CD4-positive, alpha-beta memory T cell (primary cell): ENCODE measurements at regions of chr18 and their contacts with region 1.

Region 1: DNA sequence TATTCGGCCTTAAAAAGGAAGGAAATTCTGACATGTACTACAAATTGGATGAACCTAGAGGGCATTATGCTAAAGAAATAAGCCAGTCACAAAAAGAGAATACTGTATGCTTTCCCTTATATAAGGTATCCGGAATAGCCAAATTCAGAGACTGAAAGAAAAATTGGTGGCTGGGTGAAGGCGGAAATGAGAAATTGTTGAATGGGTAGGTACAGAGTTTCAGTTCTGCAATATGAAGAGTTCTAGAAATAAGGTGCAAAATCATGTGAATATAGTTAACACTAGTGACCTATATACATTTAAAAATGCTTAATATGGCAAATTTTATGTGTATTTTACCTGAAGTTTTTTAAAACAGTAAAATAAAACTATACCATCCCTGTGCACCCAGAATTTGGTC is 43.1 kb downstream of the RMP24 start:
- DNase-seq: no peak
- H3K4me3 ChIP-seq: no peak overlapping the region
- H3K4me3 Mint-ChIP-seq: no peak overlapping the region
- H3K27ac ChIP-seq: no peak overlapping the region
- H3K27ac Mint-ChIP-seq: no peak overlapping the region
- H3K4me1 ChIP-seq: no peaks in the 10 kb centered on the region
- H3K4me1 Mint-ChIP-seq: peaks cover 0 to 7% (median 3%) of the 10 kb centered on the region in 4 donors
- H3K27me3 ChIP-seq: no peaks in the 10 kb centered on the region
- H3K27me3 Mint-ChIP-seq: no peaks in the 10 kb centered on the region

Region 2: DNA sequence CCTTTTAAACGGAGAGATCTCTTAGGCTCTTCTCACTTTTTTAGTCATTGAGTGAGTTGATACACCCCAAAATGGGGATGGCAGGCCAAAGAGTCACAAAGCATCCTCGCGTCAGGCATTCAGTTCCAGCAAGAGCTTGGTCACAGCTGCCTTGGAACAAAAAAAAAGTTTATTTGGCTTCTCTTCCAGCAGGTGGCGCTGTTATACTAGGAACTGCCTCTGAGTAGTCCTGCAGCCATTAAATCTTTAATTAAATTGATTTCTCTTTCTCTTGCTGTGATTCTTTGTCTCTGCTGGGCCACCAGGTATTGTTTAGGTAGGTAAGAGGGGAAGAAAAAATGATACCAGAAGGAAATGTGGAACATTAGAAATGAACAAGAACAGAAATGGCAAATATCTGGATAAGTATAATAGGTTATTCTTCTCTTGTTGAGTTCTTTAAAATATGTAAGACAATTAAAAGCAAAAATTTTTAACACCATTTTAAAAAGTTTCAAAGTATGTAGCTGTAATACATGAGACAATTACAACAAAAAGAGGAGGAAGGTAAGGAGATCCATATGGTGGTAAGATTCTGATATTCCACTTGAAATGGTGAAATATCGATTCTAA is 259.0 kb before region 1 on chr18:
- CTCF ChIA-PET with region 1: no interaction called
- POLR2A ChIA-PET with region 1: no interaction called
- intact Hi-C with region 1: loop called (anchors 5 kb)
- DNase-seq: peak in 4 of 5 donors; percentile 46 to 59 (median 58)
- H3K4me3 ChIP-seq: no peak overlapping the region
- H3K4me3 Mint-ChIP-seq: no peak overlapping the region
- H3K27ac ChIP-seq: no peak overlapping the region
- H3K27ac Mint-ChIP-seq: no peak overlapping the region
- H3K4me1 ChIP-seq: no peaks in the 10 kb centered on the region
- H3K4me1 Mint-ChIP-seq: no peaks in the 10 kb centered on the region
- H3K27me3 ChIP-seq: no peaks in the 10 kb centered on the region
- H3K27me3 Mint-ChIP-seq: peaks cover 11 to 17% of the 10 kb centered on the region in 2 donors

Region 3: GRCh38 chr18:35917044-35917443 is 98.6 kb before region 1 on chr18:
- CTCF ChIA-PET with region 1: no interaction called
- POLR2A ChIA-PET with region 1: no interaction called
- intact Hi-C with region 1: no loop called
- DNase-seq: no peak
- H3K4me3 ChIP-seq: no peak overlapping the region
- H3K4me3 Mint-ChIP-seq: no peak overlapping the region
- H3K27ac ChIP-seq: no peak overlapping the region
- H3K27ac Mint-ChIP-seq: no peak overlapping the region
- H3K4me1 ChIP-seq: no peaks in the 10 kb centered on the region
- H3K4me1 Mint-ChIP-seq: no peaks in the 10 kb centered on the region
- H3K27me3 ChIP-seq: no peaks in the 10 kb centered on the region
- H3K27me3 Mint-ChIP-seq: peaks cover 11 to 13% of the 10 kb centered on the region in 2 donors

Region 4: DNA sequence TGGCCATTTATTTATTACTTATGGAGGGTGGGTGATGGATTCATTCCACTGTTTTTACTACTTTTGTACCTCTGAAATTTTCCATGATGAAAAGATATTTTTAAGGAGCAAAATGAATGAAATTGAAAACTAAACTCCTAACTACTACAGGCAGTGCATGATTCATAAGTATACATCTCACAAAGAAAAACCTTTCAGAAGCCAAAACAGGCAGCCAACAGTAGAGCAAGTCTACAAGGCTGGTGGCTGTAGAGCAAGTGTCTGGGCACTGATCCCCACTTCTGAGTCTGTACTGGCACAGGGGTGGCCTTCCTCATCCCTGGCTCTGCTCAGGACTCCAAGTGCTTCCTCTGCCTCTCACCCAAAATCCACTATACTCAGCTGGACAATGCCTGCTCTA is 51.3 kb before region 1 on chr18:
- CTCF ChIA-PET with region 1: no interaction called
- POLR2A ChIA-PET with region 1: no interaction called
- intact Hi-C with region 1: no loop called
- DNase-seq: no peak
- H3K4me3 ChIP-seq: no peak overlapping the region
- H3K4me3 Mint-ChIP-seq: no peak overlapping the region
- H3K27ac ChIP-seq: no peak overlapping the region
- H3K27ac Mint-ChIP-seq: no peak overlapping the region
- H3K4me1 ChIP-seq: peaks cover 12% of the 10 kb centered on the region
- H3K4me1 Mint-ChIP-seq: peaks cover 7 to 23% (median 14%) of the 10 kb centered on the region in 4 donors
- H3K27me3 ChIP-seq: no peaks in the 10 kb centered on the region
- H3K27me3 Mint-ChIP-seq: peaks cover 1 to 2% of the 10 kb centered on the region in 2 donors

Region 5: DNA sequence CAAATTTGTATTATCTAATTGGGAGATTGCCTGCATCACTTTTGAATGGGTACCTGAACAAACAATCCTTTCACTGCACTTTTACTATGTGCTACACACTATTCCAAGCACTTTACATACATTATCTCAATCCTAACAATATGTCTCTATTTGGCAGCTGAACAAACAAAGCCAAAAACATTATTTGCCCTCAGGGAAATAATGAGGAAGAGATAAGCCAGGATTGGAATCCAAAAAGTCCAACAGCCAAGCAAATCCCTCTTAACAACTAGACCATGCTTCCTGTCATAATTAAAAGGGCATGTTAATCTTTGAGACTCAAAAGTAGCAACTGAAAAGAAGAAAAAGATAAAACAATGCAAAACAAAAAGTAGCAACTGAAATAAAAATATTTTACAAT is 19.6 kb after region 1 on chr18:
- CTCF ChIA-PET with region 1: interaction called, 11 read pairs
- POLR2A ChIA-PET with region 1: no interaction called
- intact Hi-C with region 1: no loop called
- DNase-seq: no peak
- H3K4me3 ChIP-seq: no peak overlapping the region
- H3K4me3 Mint-ChIP-seq: peak overlapping the region in 1 of 8 donors; percentile 45
- H3K27ac ChIP-seq: no peak overlapping the region
- H3K27ac Mint-ChIP-seq: peak overlapping the region in 2 of 7 donors; percentile 4 to 14
- H3K4me1 ChIP-seq: peaks cover 14% of the 10 kb centered on the region
- H3K4me1 Mint-ChIP-seq: peaks cover 23 to 49% (median 38%) of the 10 kb centered on the region in 4 donors
- H3K27me3 ChIP-seq: no peaks in the 10 kb centered on the region
- H3K27me3 Mint-ChIP-seq: no peaks in the 10 kb centered on the region

Region 6: DNA sequence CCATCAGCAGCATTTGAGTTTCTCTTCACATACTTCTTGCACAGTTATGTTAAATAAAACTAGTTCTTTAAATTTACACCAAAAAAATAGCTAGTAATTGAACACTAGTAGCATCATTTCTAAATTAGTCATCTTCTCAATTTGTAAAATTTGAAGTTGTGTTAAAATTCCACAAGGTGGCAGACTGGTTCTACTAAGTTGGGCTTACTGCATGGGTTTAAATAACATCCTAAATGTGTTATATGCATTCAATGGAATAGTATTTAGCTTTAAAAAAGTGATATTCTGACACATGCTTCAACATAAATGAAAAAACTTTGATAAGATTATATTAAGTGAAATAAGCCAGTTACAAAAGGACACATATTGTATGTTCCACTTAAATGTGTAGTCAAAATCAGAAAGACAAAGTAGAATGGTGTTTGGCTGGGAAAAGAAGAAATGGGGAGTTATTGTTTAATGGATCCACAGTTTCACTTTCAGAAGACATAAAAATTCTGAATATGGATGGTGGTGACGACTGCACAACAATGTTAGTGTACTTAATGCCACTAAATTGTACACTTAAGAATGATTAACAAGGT is 80.4 kb after region 1 on chr18:
- CTCF ChIA-PET with region 1: interaction called, 12 read pairs
- POLR2A ChIA-PET with region 1: no interaction called
- intact Hi-C with region 1: loop called (anchors 1 kb)
- DNase-seq: peak in 4 of 5 donors; percentile 42 to 47 (median 44)
- H3K4me3 ChIP-seq: no peak overlapping the region
- H3K4me3 Mint-ChIP-seq: no peak overlapping the region
- H3K27ac ChIP-seq: no peak overlapping the region
- H3K27ac Mint-ChIP-seq: no peak overlapping the region
- H3K4me1 ChIP-seq: no peaks in the 10 kb centered on the region
- H3K4me1 Mint-ChIP-seq: peaks cover 9 to 13% (median 11%) of the 10 kb centered on the region in 4 donors
- H3K27me3 ChIP-seq: no peaks in the 10 kb centered on the region
- H3K27me3 Mint-ChIP-seq: peaks cover 2 to 5% of the 10 kb centered on the region in 2 donors

Region 7: DNA sequence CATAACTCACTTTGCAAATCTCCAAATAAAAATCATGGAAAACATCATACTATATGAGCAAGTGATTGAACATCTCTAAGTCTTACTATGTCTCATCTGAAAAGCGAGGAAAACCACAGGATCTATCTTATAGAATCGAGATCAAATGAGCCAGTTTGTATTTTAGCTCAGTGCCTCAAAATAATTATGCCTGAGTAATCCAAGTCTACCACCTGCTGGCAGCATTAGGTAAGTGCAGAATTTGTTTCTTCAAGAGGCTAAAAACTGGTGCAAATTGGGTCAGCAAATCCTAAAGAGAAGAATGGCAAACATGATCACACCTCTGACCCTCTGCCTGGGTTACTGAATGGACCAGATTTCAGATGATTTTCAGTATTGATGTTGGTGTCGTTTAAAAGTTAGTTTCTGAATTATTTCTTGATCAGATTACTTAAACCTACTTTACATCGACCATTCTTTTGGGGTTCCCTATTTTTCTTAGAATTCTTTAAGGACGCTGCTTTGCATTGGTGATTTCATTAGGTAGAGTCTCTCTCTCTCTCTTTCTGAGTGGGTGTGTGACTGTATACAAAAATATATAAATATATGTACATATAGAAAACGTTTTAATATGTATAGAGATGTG is 269.2 kb after region 1 on chr18:
- CTCF ChIA-PET with region 1: interaction called, 200 read pairs
- POLR2A ChIA-PET with region 1: no interaction called
- intact Hi-C with region 1: loop called (anchors 1 kb)
- DNase-seq: peak; percentile 51 to 58 (median 53)
- H3K4me3 ChIP-seq: no peak overlapping the region
- H3K4me3 Mint-ChIP-seq: no peak overlapping the region
- H3K27ac ChIP-seq: no peak overlapping the region
- H3K27ac Mint-ChIP-seq: no peak overlapping the region
- H3K4me1 ChIP-seq: no peaks in the 10 kb centered on the region
- H3K4me1 Mint-ChIP-seq: peaks cover 0 to 2% (median 0%) of the 10 kb centered on the region in 4 donors
- H3K27me3 ChIP-seq: no peaks in the 10 kb centered on the region
- H3K27me3 Mint-ChIP-seq: peaks cover 15 to 23% of the 10 kb centered on the region in 2 donors

Region 8: DNA sequence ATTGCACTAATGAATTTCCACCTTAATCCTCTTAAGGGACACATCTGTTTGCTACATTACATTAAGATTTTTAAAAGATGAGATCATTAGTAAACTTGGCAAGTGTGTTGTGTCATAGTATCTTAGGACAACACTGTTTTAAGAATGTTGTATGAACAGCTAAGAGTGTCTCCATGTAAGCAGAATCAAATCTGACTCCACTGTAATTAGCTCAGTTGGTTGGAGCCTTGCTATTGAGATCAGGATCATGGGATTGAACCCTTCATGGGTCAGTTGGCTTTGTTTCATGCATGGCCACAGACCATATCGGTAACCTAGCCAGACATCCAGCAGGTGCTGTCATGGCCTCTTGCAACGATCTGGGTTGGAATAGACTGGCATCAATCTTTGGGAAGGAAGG is 287.0 kb after region 1 on chr18:
- CTCF ChIA-PET with region 1: no interaction called
- POLR2A ChIA-PET with region 1: no interaction called
- intact Hi-C with region 1: no loop called
- DNase-seq: no peak
- H3K4me3 ChIP-seq: no peak overlapping the region
- H3K4me3 Mint-ChIP-seq: no peak overlapping the region
- H3K27ac ChIP-seq: no peak overlapping the region
- H3K27ac Mint-ChIP-seq: no peak overlapping the region
- H3K4me1 ChIP-seq: no peaks in the 10 kb centered on the region
- H3K4me1 Mint-ChIP-seq: peaks cover 0 to 4% (median 3%) of the 10 kb centered on the region in 4 donors
- H3K27me3 ChIP-seq: peaks cover 5% of the 10 kb centered on the region
- H3K27me3 Mint-ChIP-seq: peaks cover 25 to 49% of the 10 kb centered on the region in 2 donors

Region 9: GRCh38 chr18:36809590-36810381 is 794.2 kb after region 1 on chr18:
- CTCF ChIA-PET with region 1: no interaction called
- POLR2A ChIA-PET with region 1: no interaction called
- intact Hi-C with region 1: loop called (anchors 2 kb)
- DNase-seq: peak; percentile 38 to 64 (median 61)
- H3K4me3 ChIP-seq: no peak overlapping the region
- H3K4me3 Mint-ChIP-seq: no peak overlapping the region
- H3K27ac ChIP-seq: no peak overlapping the region
- H3K27ac Mint-ChIP-seq: peak overlapping the region in 3 of 7 donors; percentile 1 to 87 (median 26)
- H3K4me1 ChIP-seq: no peaks in the 10 kb centered on the region
- H3K4me1 Mint-ChIP-seq: peaks cover 3 to 14% (median 9%) of the 10 kb centered on the region in 4 donors
- H3K27me3 ChIP-seq: no peaks in the 10 kb centered on the region
- H3K27me3 Mint-ChIP-seq: no peaks in the 10 kb centered on the region